IMR-90 (cell line): ENCODE measurements at regions of chr3 and their contacts with region 1.

Region 1: GRCh38 chr3:175002732-175003143 is 143.6 kb downstream of the NAALADL2 start:
- DNase-seq: peak; percentile 99
- ATAC-seq: peak; percentile 95
- H3K4me3 ChIP-seq: no peak overlapping the region
- H3K27ac ChIP-seq: peak overlapping the region; percentile 98; the same call in 1 of the 2 replicates
- H3K4me1 ChIP-seq: peaks cover 19% of the 10 kb centered on the region
- H3K27me3 ChIP-seq: no peaks in the 10 kb centered on the region
- CTCF ChIP-seq: no peak
- POLR2A ChIP-seq: no peak
- RAD21 ChIP-seq: 0 out of 2 replicates have a peak, but pooled peaks have one; percentile 16

Region 2: GRCh38 chr3:174125267-174125824 is 877.4 kb before region 1 on chr3:
- CTCF ChIA-PET with region 1: no interaction called
- POLR2A ChIA-PET with region 1: no interaction called
- dilution Hi-C with region 1: no loop called
- in situ Hi-C with region 1: no loop called
- intact Hi-C with region 1: loop called (anchors 2 kb)
- DNase-seq: peak; percentile 65
- ATAC-seq: peak; percentile 87
- H3K4me3 ChIP-seq: no peak overlapping the region
- H3K27ac ChIP-seq: no peak overlapping the region
- H3K4me1 ChIP-seq: peaks cover 5% of the 10 kb centered on the region; the same call in 1 of the 2 replicates
- H3K27me3 ChIP-seq: no peaks in the 10 kb centered on the region
- CTCF ChIP-seq: peak; percentile 80
- POLR2A ChIP-seq: no peak
- RAD21 ChIP-seq: peak; percentile 91

Region 3: GRCh38 chr3:174949526-174949925 is 53.2 kb before region 1 on chr3:
- CTCF ChIA-PET with region 1: no interaction called
- POLR2A ChIA-PET with region 1: no interaction called
- dilution Hi-C with region 1: no loop called
- in situ Hi-C with region 1: no loop called
- intact Hi-C with region 1: loop called (anchors 2 kb)
- DNase-seq: peak; percentile 97
- ATAC-seq: peak; percentile 72
- H3K4me3 ChIP-seq: no peak overlapping the region
- H3K27ac ChIP-seq: peak overlapping the region; percentile 86
- H3K4me1 ChIP-seq: peaks cover 11% of the 10 kb centered on the region
- H3K27me3 ChIP-seq: no peaks in the 10 kb centered on the region
- CTCF ChIP-seq: no peak
- POLR2A ChIP-seq: no peak
- RAD21 ChIP-seq: peak; percentile 10; the same call in 1 of the 2 replicates

Region 4: DNA sequence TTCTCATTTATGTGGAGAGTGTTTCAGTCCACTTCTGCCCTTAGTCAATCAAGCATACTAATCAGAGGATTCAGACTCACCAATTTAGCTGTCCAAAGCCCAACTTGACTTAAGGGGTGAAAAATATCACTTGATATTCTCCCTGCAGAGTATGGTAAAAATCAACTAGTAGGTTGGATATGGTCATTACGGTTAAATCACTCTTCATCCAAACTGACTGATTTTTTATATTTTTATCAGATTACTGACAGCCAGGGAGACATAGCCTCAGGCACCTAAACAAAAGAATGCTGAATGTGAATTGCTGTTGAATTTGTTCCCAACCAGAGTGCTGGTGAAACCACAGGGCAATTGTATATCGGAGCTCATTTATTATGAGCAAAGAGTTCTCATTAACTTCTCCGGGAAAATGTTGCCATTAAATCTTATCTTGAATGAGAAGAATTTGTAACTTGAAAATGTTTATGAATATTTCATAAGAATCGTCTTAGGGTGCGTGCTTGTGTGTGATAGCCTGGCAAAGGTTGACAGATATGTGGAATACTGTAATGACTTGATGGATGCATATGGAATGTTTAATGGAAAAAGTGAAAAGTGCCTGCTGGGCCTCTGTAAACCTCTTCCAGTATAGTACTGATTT is 267.6 kb after region 1 on chr3:
- CTCF ChIA-PET with region 1: no interaction called
- POLR2A ChIA-PET with region 1: no interaction called
- dilution Hi-C with region 1: no loop called
- in situ Hi-C with region 1: no loop called
- intact Hi-C with region 1: loop called (anchors 2 kb)
- DNase-seq: peak; percentile 62
- ATAC-seq: peak; percentile 43
- H3K4me3 ChIP-seq: no peak overlapping the region
- H3K27ac ChIP-seq: peak overlapping the region; percentile 89; the same call in 1 of the 2 replicates
- H3K4me1 ChIP-seq: peaks cover 7% of the 10 kb centered on the region
- H3K27me3 ChIP-seq: no peaks in the 10 kb centered on the region
- CTCF ChIP-seq: no peak
- POLR2A ChIP-seq: no peak
- RAD21 ChIP-seq: no peak

Region 5: DNA sequence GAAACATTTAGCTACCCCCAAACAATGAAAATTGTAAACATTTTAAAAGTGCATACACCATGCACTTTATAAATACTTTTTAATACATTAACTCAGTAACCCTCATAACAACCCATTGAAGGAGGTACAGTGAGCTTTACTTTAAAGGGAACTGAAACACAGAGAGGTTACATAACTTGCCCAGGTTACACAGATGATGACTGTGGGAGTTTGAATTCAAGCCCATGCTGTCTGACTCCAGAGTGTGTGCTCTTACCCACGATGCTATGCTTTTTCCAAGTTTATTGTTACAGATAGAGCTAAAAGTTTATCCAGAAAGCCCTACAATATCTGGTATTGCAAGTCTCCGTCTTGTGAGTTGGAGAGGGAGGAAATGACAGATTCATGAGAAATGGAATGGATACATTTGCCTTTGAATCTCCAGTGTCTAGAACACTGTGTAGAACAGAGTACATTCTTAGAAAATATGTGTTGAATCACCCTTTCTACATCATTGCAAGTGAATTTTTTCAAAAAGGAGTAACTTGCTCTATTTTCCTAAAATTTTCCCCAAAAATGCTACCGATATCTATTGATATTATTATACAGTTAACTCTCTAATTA is 284.7 kb after region 1 on chr3:
- CTCF ChIA-PET with region 1: no interaction called
- POLR2A ChIA-PET with region 1: no interaction called
- dilution Hi-C with region 1: no loop called
- in situ Hi-C with region 1: no loop called
- intact Hi-C with region 1: no loop called
- DNase-seq: peak; percentile 67
- ATAC-seq: peak; percentile 29; the same call in 1 of the 2 replicates
- H3K4me3 ChIP-seq: no peak overlapping the region
- H3K27ac ChIP-seq: no peak overlapping the region
- H3K4me1 ChIP-seq: no peaks in the 10 kb centered on the region
- H3K27me3 ChIP-seq: no peaks in the 10 kb centered on the region
- CTCF ChIP-seq: no peak
- POLR2A ChIP-seq: no peak
- RAD21 ChIP-seq: no peak

Region 6: DNA sequence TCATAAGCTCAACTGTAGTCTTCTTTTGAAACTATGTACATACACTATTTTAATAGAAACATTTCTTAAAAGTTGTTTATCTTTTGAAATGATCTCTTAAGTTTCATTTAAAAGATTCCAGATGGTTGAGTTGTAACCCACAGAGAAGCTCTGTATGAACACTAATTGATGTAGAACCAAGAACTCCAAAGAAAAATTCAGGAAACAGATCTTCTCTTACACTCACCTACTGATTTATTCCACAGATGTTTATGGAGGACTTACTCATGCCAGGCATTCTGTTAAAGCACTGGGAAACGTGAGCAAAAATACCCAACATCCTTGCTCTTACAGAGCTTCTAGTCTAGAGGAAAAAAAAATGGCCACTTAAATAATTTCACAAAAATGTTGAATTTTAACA is 407.5 kb after region 1 on chr3:
- CTCF ChIA-PET with region 1: no interaction called
- POLR2A ChIA-PET with region 1: no interaction called
- dilution Hi-C with region 1: no loop called
- in situ Hi-C with region 1: no loop called
- intact Hi-C with region 1: loop called (anchors 5 kb)
- DNase-seq: peak; percentile 89
- ATAC-seq: peak; percentile 79
- H3K4me3 ChIP-seq: no peak overlapping the region
- H3K27ac ChIP-seq: peak overlapping the region; percentile 68; the same call in 1 of the 2 replicates
- H3K4me1 ChIP-seq: peaks cover 11% of the 10 kb centered on the region
- H3K27me3 ChIP-seq: no peaks in the 10 kb centered on the region
- CTCF ChIP-seq: no peak
- POLR2A ChIP-seq: no peak
- RAD21 ChIP-seq: no peak

Region 7: GRCh38 chr3:175554801-175555200 is 552.1 kb after region 1 on chr3:
- CTCF ChIA-PET with region 1: no interaction called
- POLR2A ChIA-PET with region 1: no interaction called
- dilution Hi-C with region 1: no loop called
- in situ Hi-C with region 1: no loop called
- intact Hi-C with region 1: no loop called
- DNase-seq: no peak
- ATAC-seq: no peak
- H3K4me3 ChIP-seq: no peak overlapping the region
- H3K27ac ChIP-seq: no peak overlapping the region
- H3K4me1 ChIP-seq: no peaks in the 10 kb centered on the region
- H3K27me3 ChIP-seq: no peaks in the 10 kb centered on the region
- CTCF ChIP-seq: no peak
- POLR2A ChIP-seq: no peak
- RAD21 ChIP-seq: no peak